Activated CD4-positive, alpha-beta T cell treated with anti-CD3 and anti-CD28 coated beads for 36 hours (primary cell): ENCODE measurements at regions of chr1 and their contacts with region 1.

Region 1: GRCh38 chr1:235011599-235012435 is 116.8 kb downstream of the TOMM20 start:
- DNase-seq: peak; percentile 98
- ATAC-seq: peak; percentile 80
- H3K4me3 Mint-ChIP-seq: peak overlapping the region; percentile 52
- H3K27ac Mint-ChIP-seq: peak overlapping the region; percentile 93
- H3K4me1 Mint-ChIP-seq: peaks cover 91% of the 10 kb centered on the region
- H3K27me3 Mint-ChIP-seq: no peaks in the 10 kb centered on the region

Region 2: DNA sequence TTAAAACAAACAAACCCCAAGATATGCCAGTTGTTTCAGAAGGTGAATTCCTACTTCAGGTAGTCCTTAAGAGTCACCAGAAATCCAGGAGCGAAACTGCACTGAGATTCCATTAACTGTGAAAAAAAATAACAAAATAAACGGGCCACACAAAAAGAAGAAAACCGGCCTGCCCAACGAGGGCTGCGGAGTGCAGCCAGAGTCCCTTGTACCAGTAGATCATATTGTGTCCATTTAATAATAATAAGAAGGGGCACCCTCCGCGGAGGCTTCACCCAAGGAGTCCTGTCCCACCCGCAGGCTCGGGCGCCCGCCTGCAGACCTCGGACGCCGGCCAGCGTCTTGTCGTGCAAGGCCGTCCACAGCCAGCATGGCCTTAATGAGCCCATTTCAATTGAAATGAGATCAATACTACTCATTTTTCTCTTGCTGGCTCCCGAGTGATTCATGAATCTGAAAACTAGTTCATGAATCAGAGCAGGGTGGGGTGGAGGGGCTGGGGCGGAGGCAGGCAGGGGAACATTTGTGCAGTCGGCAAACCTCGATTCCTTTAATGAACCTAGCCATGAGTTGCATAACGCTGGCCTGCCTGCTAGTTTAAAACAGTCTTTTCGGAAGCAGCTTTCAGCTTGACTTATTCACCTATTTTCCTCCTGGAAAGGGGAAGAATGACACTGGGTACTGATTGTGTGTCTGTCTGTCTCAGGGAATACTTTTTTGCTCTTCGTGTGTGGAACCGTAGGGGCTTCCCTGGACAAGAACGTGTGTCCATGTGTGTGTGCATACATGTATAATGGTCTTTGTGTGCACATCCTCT is 288.7 kb before region 1 on chr1:
- CTCF ChIA-PET with region 1: interaction called, 3 read pairs
- POLR2A ChIA-PET with region 1: interaction called, 8 read pairs
- intact Hi-C with region 1: loop called (anchors 1 kb)
- DNase-seq: peak; percentile 92
- ATAC-seq: peak; percentile 68
- H3K4me3 Mint-ChIP-seq: peak overlapping the region; percentile 64
- H3K27ac Mint-ChIP-seq: peak overlapping the region; percentile 97
- H3K4me1 Mint-ChIP-seq: peaks cover 66% of the 10 kb centered on the region
- H3K27me3 Mint-ChIP-seq: no peaks in the 10 kb centered on the region

Region 3: DNA sequence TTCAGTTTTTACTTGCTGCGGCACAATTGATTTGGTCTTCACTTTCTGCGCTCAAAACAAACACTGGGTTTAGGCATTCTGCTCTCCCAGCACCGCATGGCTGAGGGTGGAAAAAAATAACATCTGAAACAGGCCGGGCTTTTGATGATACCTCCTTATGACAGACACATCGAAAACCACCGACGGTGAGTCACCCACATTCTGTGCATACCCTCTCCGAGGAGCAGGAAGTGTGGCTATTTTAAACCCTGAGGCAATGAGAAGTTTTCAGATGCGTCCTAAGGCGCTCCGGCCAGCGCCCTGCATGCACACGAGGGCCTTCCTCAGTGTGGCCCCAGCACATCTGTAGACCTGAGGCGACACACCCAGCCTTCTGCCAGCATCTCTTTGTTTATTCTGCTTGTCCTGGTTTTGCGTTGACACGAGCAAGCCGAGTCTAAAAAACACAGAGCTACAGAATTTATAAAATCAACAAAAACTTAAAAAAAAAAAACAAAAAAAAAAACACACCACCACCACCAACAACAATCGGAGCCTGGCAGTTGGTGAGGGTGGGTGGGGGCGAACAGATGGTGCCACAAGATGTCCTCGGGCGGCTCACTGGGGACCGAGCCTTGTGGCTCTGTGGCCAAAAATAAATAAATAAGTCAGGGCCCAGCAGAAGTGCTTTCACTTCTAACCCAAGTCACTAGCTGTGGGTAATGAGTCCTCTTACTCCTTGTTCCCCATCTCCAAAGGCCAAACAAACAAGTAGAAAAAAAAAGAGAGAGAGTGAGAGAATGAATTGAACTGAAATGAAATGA is 239.3 kb before region 1 on chr1:
- CTCF ChIA-PET with region 1: interaction called, 6 read pairs
- POLR2A ChIA-PET with region 1: no interaction called
- intact Hi-C with region 1: loop called (anchors 1 kb)
- DNase-seq: peak; percentile 95
- ATAC-seq: peak; percentile 78
- H3K4me3 Mint-ChIP-seq: peak overlapping the region; percentile 45
- H3K27ac Mint-ChIP-seq: peak overlapping the region; percentile 95
- H3K4me1 Mint-ChIP-seq: peaks cover 59% of the 10 kb centered on the region
- H3K27me3 Mint-ChIP-seq: peaks cover 1% of the 10 kb centered on the region

Region 4: DNA sequence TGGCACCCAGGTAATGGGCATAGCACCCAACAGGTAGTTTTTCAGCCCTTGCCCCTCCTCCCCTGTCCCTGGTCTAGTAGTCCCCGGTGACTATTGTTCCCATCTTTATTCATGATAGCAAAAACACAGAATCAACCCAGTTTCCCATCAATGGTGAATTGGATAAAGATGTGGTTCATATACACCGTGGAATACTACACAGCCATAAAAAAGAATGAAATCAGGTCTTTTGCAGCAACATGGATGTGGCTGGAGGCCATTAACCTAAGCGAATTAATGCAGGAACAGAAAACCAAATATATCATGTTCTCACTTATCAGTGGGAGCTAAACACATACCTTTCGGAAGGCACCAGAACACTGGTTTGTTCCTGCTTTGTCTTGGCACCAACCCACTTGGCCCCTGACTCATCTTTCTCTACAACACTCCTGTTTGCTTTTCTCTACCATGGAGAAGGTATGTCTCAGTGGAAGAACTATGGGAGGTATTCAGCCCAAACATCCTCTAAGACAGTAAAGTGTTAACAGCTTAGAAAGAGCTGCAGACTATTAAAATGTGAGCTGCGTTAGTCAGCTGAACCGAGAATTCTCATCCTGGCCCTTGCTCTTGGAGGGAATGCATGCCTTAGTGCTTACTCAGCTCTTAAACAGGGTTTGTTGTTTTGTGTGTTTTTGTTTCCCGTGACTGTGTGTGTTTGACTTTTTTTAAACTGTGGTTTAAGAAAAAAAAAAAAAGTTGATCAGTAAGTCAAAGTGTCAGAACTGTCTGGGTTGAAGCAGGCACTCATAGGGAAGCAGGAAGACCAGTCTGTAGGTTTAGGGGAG is 86.2 kb before region 1 on chr1:
- CTCF ChIA-PET with region 1: interaction called, 3 read pairs
- POLR2A ChIA-PET with region 1: interaction called, 8 read pairs
- intact Hi-C with region 1: loop called (anchors 1 kb)
- DNase-seq: no peak
- ATAC-seq: peak; percentile 27
- H3K4me3 Mint-ChIP-seq: peak overlapping the region; percentile 59
- H3K27ac Mint-ChIP-seq: peak overlapping the region; percentile 86
- H3K4me1 Mint-ChIP-seq: peaks cover 53% of the 10 kb centered on the region
- H3K27me3 Mint-ChIP-seq: no peaks in the 10 kb centered on the region

Region 5: GRCh38 chr1:234978397-234979295 is 33.2 kb before region 1 on chr1:
- CTCF ChIA-PET with region 1: interaction called, 7 read pairs
- POLR2A ChIA-PET with region 1: interaction called, 19 read pairs
- intact Hi-C with region 1: loop called (anchors 1 to 2 kb)
- DNase-seq: peak; percentile 80
- ATAC-seq: peak; percentile 62
- H3K4me3 Mint-ChIP-seq: peak overlapping the region; percentile 75
- H3K27ac Mint-ChIP-seq: peak overlapping the region; percentile 98
- H3K4me1 Mint-ChIP-seq: peaks cover 66% of the 10 kb centered on the region
- H3K27me3 Mint-ChIP-seq: no peaks in the 10 kb centered on the region

Region 6: DNA sequence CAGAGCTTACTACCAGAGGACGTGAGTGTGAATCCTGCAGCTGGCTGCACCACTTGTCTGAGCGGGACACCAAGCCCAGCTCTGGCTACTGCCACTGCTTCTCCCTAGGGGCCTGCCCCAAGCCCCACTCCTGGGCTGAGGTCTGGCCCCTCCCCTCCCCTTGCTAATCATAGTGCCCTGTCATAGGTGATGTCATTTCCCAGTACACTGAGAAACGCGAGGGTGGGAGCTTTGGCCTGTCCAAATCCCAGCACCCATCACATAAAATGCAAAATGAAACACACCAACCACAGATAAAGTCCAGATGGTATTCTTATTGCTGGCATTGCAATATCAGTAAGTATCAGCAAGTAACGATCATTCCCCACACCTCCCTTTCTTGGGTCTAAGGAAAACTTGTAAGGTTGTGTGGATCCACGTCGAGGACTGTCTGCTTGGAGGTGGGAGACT is 39.1 kb after region 1 on chr1:
- CTCF ChIA-PET with region 1: interaction called, 4 read pairs
- POLR2A ChIA-PET with region 1: interaction called, 7 read pairs
- intact Hi-C with region 1: loop called (anchors 1 kb)
- DNase-seq: peak; percentile 62
- ATAC-seq: peak; percentile 70
- H3K4me3 Mint-ChIP-seq: no peak overlapping the region
- H3K27ac Mint-ChIP-seq: peak overlapping the region; percentile 37
- H3K4me1 Mint-ChIP-seq: peaks cover 51% of the 10 kb centered on the region
- H3K27me3 Mint-ChIP-seq: no peaks in the 10 kb centered on the region

Region 7: DNA sequence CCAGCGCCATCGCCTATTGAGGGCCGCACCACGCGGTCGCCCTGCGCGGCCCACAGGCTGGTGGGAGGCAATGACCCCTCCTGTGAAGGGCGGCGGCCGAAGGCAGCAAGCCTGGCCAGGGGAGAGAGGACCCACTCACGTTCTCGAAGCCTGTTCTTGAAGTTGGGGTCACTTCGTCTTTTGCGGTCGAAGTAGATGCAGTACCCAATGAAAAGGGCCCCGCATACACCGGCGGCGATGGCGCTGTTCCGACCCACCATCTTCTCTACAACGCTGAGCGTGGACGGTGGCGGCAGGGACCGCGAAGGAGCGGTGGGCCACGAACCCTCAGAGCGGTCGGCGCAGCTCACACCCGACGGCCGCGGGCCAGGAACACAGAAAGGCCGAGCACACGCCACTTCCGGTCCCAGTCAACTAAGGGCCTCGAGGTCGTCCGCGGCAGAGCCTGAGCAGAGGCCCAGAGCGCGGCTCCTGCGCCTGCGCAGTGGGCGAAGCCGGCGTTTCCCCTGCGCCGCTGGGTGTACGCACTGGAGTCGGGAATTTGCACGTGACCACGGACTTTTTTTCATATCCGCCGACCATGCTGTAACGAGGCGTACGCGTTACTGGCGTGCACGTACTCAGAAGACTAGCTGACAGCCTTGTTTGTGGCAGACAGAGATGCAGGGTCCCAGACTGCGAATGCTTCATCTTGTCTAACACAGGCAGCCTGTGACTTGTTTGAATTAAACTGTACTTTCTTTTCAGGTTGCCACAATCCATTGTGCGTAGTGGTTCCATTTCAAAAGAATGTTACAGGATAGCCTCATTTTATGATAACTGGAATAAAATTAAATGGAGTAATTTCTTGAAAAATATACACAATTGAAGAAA is 116.9 kb after region 1 on chr1 and contains the start of gene TOMM20:
- CTCF ChIA-PET with region 1: no interaction called
- POLR2A ChIA-PET with region 1: no interaction called
- intact Hi-C with region 1: loop called in 1 of 2 experiments (anchors 2 kb)
- DNase-seq: peak; percentile 97
- ATAC-seq: peak; percentile 92
- H3K4me3 Mint-ChIP-seq: peak within 1 kb of the TSS; percentile 90
- H3K27ac Mint-ChIP-seq: peak within 1 kb of the TSS; percentile 98
- H3K4me1 Mint-ChIP-seq: peaks cover 41% of the 10 kb centered on the region
- H3K27me3 Mint-ChIP-seq: no peaks in the 10 kb centered on the region
- total RNA-seq, gene TOMM20: 62.1 to 148 TPM